Endothelial cell of umbilical vein (primary cell): ENCODE measurements at regions of chr12 and their contacts with region 1.

Region 1: GRCh38 chr12:43282106-43282505 is 269.9 kb downstream of the ADAMTS20 start:
- DNase-seq: peak; percentile 72
- H3K4me3 ChIP-seq: no peak overlapping the region
- H3K27ac ChIP-seq: no peak overlapping the region
- H3K4me1 ChIP-seq: peaks cover 51% of the 10 kb centered on the region
- H3K27me3 ChIP-seq: no peaks in the 10 kb centered on the region
- CTCF ChIP-seq: peak in 1 of 2 donors; percentile 14
- POLR2A ChIP-seq: no peak

Region 2: DNA sequence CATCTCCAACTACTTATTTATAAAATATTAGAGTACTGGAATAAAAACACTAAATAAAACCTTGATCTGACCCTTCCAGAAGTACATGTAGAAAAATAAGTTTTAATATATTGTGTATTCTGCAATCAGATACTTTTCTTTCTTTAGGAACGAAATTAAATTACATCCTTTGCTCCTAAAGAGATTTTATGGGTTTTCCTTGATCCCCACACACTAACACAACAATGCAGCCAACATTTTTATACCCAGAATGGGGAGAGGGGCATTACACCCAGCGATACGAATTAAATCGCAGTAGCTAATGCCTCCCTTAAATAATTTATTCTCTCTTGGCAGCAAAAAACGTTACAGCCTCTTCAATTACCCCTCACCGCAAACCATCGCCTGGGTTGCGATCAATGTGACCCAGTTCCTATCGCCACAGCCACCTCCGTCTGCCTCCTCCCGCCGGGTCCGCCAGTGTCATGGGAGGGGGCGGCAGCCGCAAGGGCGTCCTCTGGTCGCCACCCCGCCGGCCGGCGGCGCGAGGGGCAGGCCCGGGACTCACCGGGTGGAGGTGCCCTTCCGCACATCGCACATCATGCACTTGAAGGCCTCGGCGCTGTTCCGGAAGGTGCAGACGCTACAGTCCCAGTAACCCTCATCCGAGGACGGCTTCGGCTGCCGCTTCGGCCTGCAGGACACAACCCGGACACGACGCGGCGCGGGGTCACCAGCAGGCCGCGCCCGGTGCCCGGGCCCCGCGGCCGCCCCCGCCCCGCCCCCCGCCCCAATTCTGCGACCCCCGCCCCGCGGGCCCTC is 1044.9 kb before region 1 on chr12:
- CTCF ChIA-PET with region 1: no interaction called
- POLR2A ChIA-PET with region 1: no interaction called
- dilution Hi-C with region 1: no loop called
- intact Hi-C with region 1: loop called (anchors 1 kb)
- DNase-seq: peak; percentile 68
- H3K4me3 ChIP-seq: peak overlapping the region; percentile 39 to 98 (median 70)
- H3K27ac ChIP-seq: peak overlapping the region; percentile 41
- H3K4me1 ChIP-seq: peaks cover 13% of the 10 kb centered on the region
- H3K27me3 ChIP-seq: no peaks in the 10 kb centered on the region
- CTCF ChIP-seq: peak; percentile 29 to 53
- POLR2A ChIP-seq: no peak

Region 3: GRCh38 chr12:42469355-42470175 is 812.5 kb before region 1 on chr12:
- CTCF ChIA-PET with region 1: interaction called, 20 read pairs
- POLR2A ChIA-PET with region 1: no interaction called
- dilution Hi-C with region 1: no loop called
- intact Hi-C with region 1: no loop called
- DNase-seq: no peak
- H3K4me3 ChIP-seq: no peak overlapping the region
- H3K27ac ChIP-seq: no peak overlapping the region
- H3K4me1 ChIP-seq: peaks cover 50% of the 10 kb centered on the region
- H3K27me3 ChIP-seq: no peaks in the 10 kb centered on the region
- CTCF ChIP-seq: no peak
- POLR2A ChIP-seq: no peak

Region 4: DNA sequence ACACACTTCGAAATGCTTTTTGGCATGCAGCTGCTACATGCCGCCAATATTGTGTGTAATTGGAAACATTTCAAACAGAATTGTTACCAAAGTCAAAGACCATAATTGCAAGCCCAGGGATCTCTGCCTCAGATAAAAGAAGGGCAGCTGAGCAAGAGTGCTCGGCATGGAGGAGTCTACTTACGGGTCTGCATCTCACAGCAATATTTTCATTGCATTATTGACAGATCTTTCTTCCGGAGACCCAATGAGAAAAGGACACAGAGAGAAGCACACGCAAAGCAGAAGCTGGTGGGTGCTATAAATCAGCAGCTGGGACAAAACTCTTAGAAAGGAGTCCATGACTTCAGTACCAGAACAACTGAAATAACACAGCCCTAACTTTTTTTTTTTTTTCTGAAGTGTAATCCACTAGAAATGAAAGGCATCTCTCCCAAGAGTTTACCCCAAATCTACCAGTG is 697.4 kb before region 1 on chr12:
- CTCF ChIA-PET with region 1: interaction called, 24 read pairs
- POLR2A ChIA-PET with region 1: interaction called, 3 read pairs
- dilution Hi-C with region 1: loop called (anchors 10 kb)
- intact Hi-C with region 1: loop called (anchors 1 kb)
- DNase-seq: peak; percentile 37
- H3K4me3 ChIP-seq: peak overlapping the region in 1 of 3 experiments; percentile 99
- H3K27ac ChIP-seq: no peak overlapping the region
- H3K4me1 ChIP-seq: peaks cover 67% of the 10 kb centered on the region
- H3K27me3 ChIP-seq: no peaks in the 10 kb centered on the region
- CTCF ChIP-seq: no peak
- POLR2A ChIP-seq: no peak

Region 5: GRCh38 chr12:42961395-42961794 is 320.7 kb before region 1 on chr12:
- CTCF ChIA-PET with region 1: interaction called, 20 read pairs
- POLR2A ChIA-PET with region 1: interaction called, 10 read pairs
- dilution Hi-C with region 1: no loop called
- intact Hi-C with region 1: loop called (anchors 1 kb)
- DNase-seq: peak; percentile 89
- H3K4me3 ChIP-seq: no peak overlapping the region
- H3K27ac ChIP-seq: peak overlapping the region; percentile 81
- H3K4me1 ChIP-seq: peaks cover 72% of the 10 kb centered on the region
- H3K27me3 ChIP-seq: no peaks in the 10 kb centered on the region
- CTCF ChIP-seq: no peak
- POLR2A ChIP-seq: peak; percentile 81

Region 6: GRCh38 chr12:43158126-43158525 is 124.0 kb before region 1 on chr12:
- CTCF ChIA-PET with region 1: no interaction called
- POLR2A ChIA-PET with region 1: no interaction called
- dilution Hi-C with region 1: no loop called
- intact Hi-C with region 1: no loop called
- DNase-seq: no peak
- H3K4me3 ChIP-seq: no peak overlapping the region
- H3K27ac ChIP-seq: no peak overlapping the region
- H3K4me1 ChIP-seq: no peaks in the 10 kb centered on the region
- H3K27me3 ChIP-seq: no peaks in the 10 kb centered on the region
- CTCF ChIP-seq: no peak
- POLR2A ChIP-seq: no peak

Region 7: GRCh38 chr12:43267818-43268217 is 14.3 kb before region 1 on chr12:
- CTCF ChIA-PET with region 1: interaction called, 14 read pairs
- POLR2A ChIA-PET with region 1: no interaction called
- dilution Hi-C with region 1: no loop called
- intact Hi-C with region 1: no loop called
- DNase-seq: peak; percentile 92
- H3K4me3 ChIP-seq: peak overlapping the region in 1 of 3 experiments; percentile 23
- H3K27ac ChIP-seq: peak overlapping the region; percentile 64
- H3K4me1 ChIP-seq: peaks cover 25% of the 10 kb centered on the region
- H3K27me3 ChIP-seq: no peaks in the 10 kb centered on the region
- CTCF ChIP-seq: no peak
- POLR2A ChIP-seq: peak; percentile 78

Region 8: DNA sequence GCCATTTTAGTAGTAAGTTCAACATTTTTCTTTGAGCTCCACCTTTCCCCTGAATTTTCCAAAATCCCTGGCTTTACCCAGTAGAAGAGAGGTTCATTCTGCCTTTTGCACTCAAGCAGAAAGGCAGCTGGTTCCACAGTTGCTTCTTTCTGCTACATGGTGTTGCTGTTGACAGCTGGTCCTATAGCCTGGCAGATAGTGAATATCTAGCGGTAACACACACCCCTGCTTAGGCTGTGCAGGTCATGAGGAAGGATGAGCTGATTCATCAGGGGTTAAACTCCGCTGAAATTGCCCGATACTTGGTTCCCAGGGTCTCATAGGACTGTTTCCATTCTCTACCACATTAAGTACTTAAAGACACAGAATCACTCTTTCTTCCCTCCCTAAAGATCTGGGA is 414.0 kb after region 1 on chr12:
- CTCF ChIA-PET with region 1: no interaction called
- POLR2A ChIA-PET with region 1: no interaction called
- dilution Hi-C with region 1: no loop called
- intact Hi-C with region 1: no loop called
- DNase-seq: no peak
- H3K4me3 ChIP-seq: no peak overlapping the region
- H3K27ac ChIP-seq: no peak overlapping the region
- H3K4me1 ChIP-seq: peaks cover 3% of the 10 kb centered on the region
- H3K27me3 ChIP-seq: peaks cover 0 to 2% of the 10 kb centered on the region in 2 experiments
- CTCF ChIP-seq: no peak
- POLR2A ChIP-seq: no peak